SK-N-SH (cell line): ENCODE measurements at regions of chr2 and their contacts with region 1.

Region 1: GRCh38 chr2:25276569-25277465 is 64.9 kb downstream of the DNMT3A start:
- DNase-seq: peak; percentile 86
- H3K4me3 ChIP-seq: no peak overlapping the region; a peak in 1 of 4 replicates
- H3K27ac ChIP-seq: no peak overlapping the region; a peak in 1 of 4 replicates
- H3K4me1 ChIP-seq: peaks cover 0 to 23% of the 10 kb centered on the region in 2 experiments; a peak in 2 of 4 replicates
- H3K27me3 ChIP-seq: no peaks in the 10 kb centered on the region
- CTCF ChIP-seq: peak; percentile 51
- EP300 ChIP-seq: no peak
- RAD21 ChIP-seq: no peak

Region 2: GRCh38 chr2:25265802-25266201 is 11.0 kb before region 1 on chr2:
- CTCF ChIA-PET with region 1: interaction called, 22 read pairs
- POLR2A ChIA-PET with region 1: no interaction called
- DNase-seq: no peak
- H3K4me3 ChIP-seq: no peak overlapping the region
- H3K27ac ChIP-seq: no peak overlapping the region
- H3K4me1 ChIP-seq: peaks cover 0 to 3% of the 10 kb centered on the region in 2 experiments; a peak in 1 of 4 replicates
- H3K27me3 ChIP-seq: no peaks in the 10 kb centered on the region
- CTCF ChIP-seq: no peak
- EP300 ChIP-seq: no peak
- RAD21 ChIP-seq: no peak